Psoas muscle (tissue), 8 donors: ENCODE measurements at regions of chr3 and their contacts with region 1.

Region 1: GRCh38 chr3:194265483-194265892 is 85.6 kb downstream of the CPN2 start:
- DNase-seq: peak; percentile 91 to 97
- ATAC-seq: peak; percentile 95 to 97 (median 97)
- H3K4me3 ChIP-seq: no peak overlapping the region
- H3K27ac ChIP-seq: peak overlapping the region; percentile 64
- H3K4me1 ChIP-seq: peaks cover 25% of the 10 kb centered on the region
- H3K27me3 ChIP-seq: no peaks in the 10 kb centered on the region
- CTCF ChIP-seq: no peak

Region 2: GRCh38 chr3:194141415-194142155 is 123.9 kb before region 1 on chr3:
- intact Hi-C with region 1: loop called (anchors 2 to 5 kb)
- DNase-seq: peak; percentile 94
- ATAC-seq: peak; percentile 67 to 79 (median 70)
- H3K4me3 ChIP-seq: peak overlapping the region; percentile 92
- H3K27ac ChIP-seq: peak overlapping the region; percentile 99
- H3K4me1 ChIP-seq: peaks cover 54% of the 10 kb centered on the region
- H3K27me3 ChIP-seq: no peaks in the 10 kb centered on the region
- CTCF ChIP-seq: no peak